ENCODE measurements at regions of chr12 and their contacts with region 1.

Region 1: GRCh38 chr12:111993292-111994150 is 19.4 kb downstream of the TMEM116 start:
- DNase-seq: peak in 7 of 14 experiments; percentile 18 to 72 (median 52)
- ATAC-seq: peak; percentile 78
- H3K4me3 ChIP-seq: peak overlapping the region; percentile 57
- H3K4me3 Mint-ChIP-seq: peak overlapping the region; percentile 81
- H3K27ac ChIP-seq: peak overlapping the region; percentile 31 to 44
- H3K27ac Mint-ChIP-seq: peak overlapping the region; percentile 86
- H3K4me1 ChIP-seq: peaks cover 56% of the 10 kb centered on the region
- H3K4me1 Mint-ChIP-seq: peaks cover 80% of the 10 kb centered on the region
- H3K27me3 ChIP-seq: no peaks in the 10 kb centered on the region
- H3K27me3 Mint-ChIP-seq: no peaks in the 10 kb centered on the region
- CTCF ChIP-seq: no peak

Region 2: GRCh38 chr12:111405149-111405860 is 588.2 kb before region 1 on chr12:
- CTCF ChIA-PET with region 1: no interaction called
- POLR2A ChIA-PET with region 1: no interaction called
- intact Hi-C with region 1: no loop called
- DNase-seq: peak; percentile 96 to 100 (median 99)
- ATAC-seq: peak; percentile 78
- H3K4me3 ChIP-seq: peak overlapping the region; percentile 63
- H3K4me3 Mint-ChIP-seq: peak overlapping the region; percentile 89
- H3K27ac ChIP-seq: peak overlapping the region; percentile 75 to 98
- H3K27ac Mint-ChIP-seq: peak overlapping the region; percentile 72
- H3K4me1 ChIP-seq: peaks cover 68% of the 10 kb centered on the region
- H3K4me1 Mint-ChIP-seq: peaks cover 62% of the 10 kb centered on the region
- H3K27me3 ChIP-seq: no peaks in the 10 kb centered on the region
- H3K27me3 Mint-ChIP-seq: no peaks in the 10 kb centered on the region
- CTCF ChIP-seq: peak; percentile 74

Region 3: DNA sequence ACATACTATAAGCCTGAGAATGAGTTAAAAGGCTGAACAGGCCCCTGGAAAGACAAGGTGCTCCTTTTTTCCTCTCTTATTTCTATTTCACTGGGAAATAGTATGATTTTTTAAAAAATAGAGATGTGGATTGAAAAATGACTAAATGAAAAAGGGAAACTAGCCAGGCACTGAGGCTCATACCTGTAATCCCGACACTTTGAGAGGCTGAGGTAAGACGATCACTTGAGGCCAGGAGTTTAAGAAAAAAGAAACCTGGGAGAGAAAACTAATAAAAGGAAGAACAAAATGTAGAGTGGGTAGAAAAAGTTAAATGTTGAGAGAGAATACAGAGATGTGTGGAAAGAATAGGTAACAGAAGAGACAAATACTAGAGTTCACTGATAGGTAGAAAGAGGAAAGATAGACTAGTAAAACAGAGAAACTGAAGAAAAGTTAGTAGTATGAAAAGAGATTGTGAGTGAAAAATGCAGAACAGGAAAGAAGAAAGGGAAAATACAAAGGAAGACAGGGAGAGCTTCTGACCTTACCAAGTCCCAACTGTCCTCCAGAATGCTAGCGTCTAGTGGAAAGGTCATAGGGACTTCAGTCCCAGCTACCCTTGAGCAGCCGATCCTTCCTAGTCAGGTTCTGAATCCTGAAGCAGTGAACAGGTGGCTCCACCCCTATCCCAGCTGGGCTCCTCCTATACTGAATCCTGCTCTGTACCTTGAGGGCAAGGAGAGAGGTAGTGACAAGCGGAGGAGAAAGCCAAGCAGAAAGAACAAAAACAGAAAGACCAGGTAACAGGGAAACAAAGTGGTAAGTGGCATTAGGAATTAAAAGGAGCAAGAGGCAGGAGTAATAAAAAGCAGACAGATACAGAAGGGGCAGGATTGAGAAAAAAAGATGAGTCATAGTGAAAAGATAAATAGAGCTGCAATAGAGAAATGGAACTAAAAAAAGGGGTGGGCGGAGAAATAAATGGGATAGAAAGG is 12.2 kb after region 1 on chr12:
- CTCF ChIA-PET with region 1: interaction called, 3 read pairs
- POLR2A ChIA-PET with region 1: interaction called, 40 read pairs
- intact Hi-C with region 1: loop called (anchors 1 to 2 kb)
- DNase-seq: no peak
- ATAC-seq: no peak
- H3K4me3 ChIP-seq: no peak overlapping the region
- H3K4me3 Mint-ChIP-seq: no peak overlapping the region
- H3K27ac ChIP-seq: peak overlapping the region; percentile 23 to 30
- H3K27ac Mint-ChIP-seq: peak overlapping the region; percentile 36
- H3K4me1 ChIP-seq: peaks cover 19% of the 10 kb centered on the region
- H3K4me1 Mint-ChIP-seq: peaks cover 59% of the 10 kb centered on the region
- H3K27me3 ChIP-seq: no peaks in the 10 kb centered on the region
- H3K27me3 Mint-ChIP-seq: no peaks in the 10 kb centered on the region
- CTCF ChIP-seq: no peak

Measured in CD4-positive, alpha-beta T cell (primary cell).